B cell (primary cell): ENCODE measurements at regions of chr17 and their contacts with region 1.

Region 1: GRCh38 chr17:16987830-16988601 is 16.1 kb upstream of the TNFRSF13B start:
- DNase-seq: peak; percentile 94
- ATAC-seq: peak; percentile 81
- H3K4me3 ChIP-seq: peak overlapping the region; percentile 35 to 58 (median 50)
- H3K4me3 Mint-ChIP-seq: peak overlapping the region; percentile 85
- H3K27ac ChIP-seq: peak overlapping the region; percentile 91 to 98
- H3K27ac Mint-ChIP-seq: peak overlapping the region; percentile 98
- H3K4me1 ChIP-seq: peaks cover 53 to 68% of the 10 kb centered on the region in 2 donors
- H3K4me1 Mint-ChIP-seq: peaks cover 80% of the 10 kb centered on the region
- H3K27me3 ChIP-seq: no peaks in the 10 kb centered on the region
- H3K27me3 Mint-ChIP-seq: no peaks in the 10 kb centered on the region
- CTCF ChIP-seq: no peak

Region 2: GRCh38 chr17:16915752-16916556 is 72.1 kb before region 1 on chr17:
- CTCF ChIA-PET with region 1: interaction called, 88 read pairs
- POLR2A ChIA-PET with region 1: interaction called, 3 read pairs
- intact Hi-C with region 1: loop called (anchors 1 kb)
- DNase-seq: peak; percentile 61
- ATAC-seq: peak; percentile 78
- H3K4me3 ChIP-seq: no peak overlapping the region
- H3K4me3 Mint-ChIP-seq: no peak overlapping the region
- H3K27ac ChIP-seq: no peak overlapping the region
- H3K27ac Mint-ChIP-seq: peak overlapping the region; percentile 15
- H3K4me1 ChIP-seq: peaks cover 0 to 18% of the 10 kb centered on the region in 2 donors
- H3K4me1 Mint-ChIP-seq: peaks cover 24% of the 10 kb centered on the region
- H3K27me3 ChIP-seq: no peaks in the 10 kb centered on the region
- H3K27me3 Mint-ChIP-seq: peaks cover 3% of the 10 kb centered on the region
- CTCF ChIP-seq: peak; percentile 51

Region 3: GRCh38 chr17:16922386-16923104 is 65.5 kb before region 1 on chr17:
- CTCF ChIA-PET with region 1: interaction called, 88 read pairs
- POLR2A ChIA-PET with region 1: no interaction called
- intact Hi-C with region 1: loop called (anchors 1 kb)
- DNase-seq: peak; percentile 48
- ATAC-seq: peak; percentile 44
- H3K4me3 ChIP-seq: no peak overlapping the region
- H3K4me3 Mint-ChIP-seq: no peak overlapping the region
- H3K27ac ChIP-seq: no peak overlapping the region
- H3K27ac Mint-ChIP-seq: peak overlapping the region; percentile 22
- H3K4me1 ChIP-seq: no peaks in the 10 kb centered on the region
- H3K4me1 Mint-ChIP-seq: no peaks in the 10 kb centered on the region
- H3K27me3 ChIP-seq: no peaks in the 10 kb centered on the region
- H3K27me3 Mint-ChIP-seq: no peaks in the 10 kb centered on the region
- CTCF ChIP-seq: peak; percentile 47

Region 4: GRCh38 chr17:16945663-16946218 is 42.3 kb before region 1 on chr17:
- CTCF ChIA-PET with region 1: interaction called, 21 read pairs
- POLR2A ChIA-PET with region 1: no interaction called
- intact Hi-C with region 1: loop called (anchors 1 kb)
- DNase-seq: no peak
- ATAC-seq: no peak
- H3K4me3 ChIP-seq: no peak overlapping the region
- H3K4me3 Mint-ChIP-seq: no peak overlapping the region
- H3K27ac ChIP-seq: no peak overlapping the region
- H3K27ac Mint-ChIP-seq: peak overlapping the region; percentile 79
- H3K4me1 ChIP-seq: peaks cover 23 to 54% of the 10 kb centered on the region in 2 donors
- H3K4me1 Mint-ChIP-seq: peaks cover 61% of the 10 kb centered on the region
- H3K27me3 ChIP-seq: no peaks in the 10 kb centered on the region
- H3K27me3 Mint-ChIP-seq: no peaks in the 10 kb centered on the region
- CTCF ChIP-seq: no peak

Region 5: GRCh38 chr17:16954521-16954920 is 33.5 kb before region 1 on chr17:
- CTCF ChIA-PET with region 1: interaction called, 36 read pairs
- POLR2A ChIA-PET with region 1: no interaction called
- intact Hi-C with region 1: no loop called
- DNase-seq: no peak
- ATAC-seq: peak; percentile 24
- H3K4me3 ChIP-seq: no peak overlapping the region
- H3K4me3 Mint-ChIP-seq: peak overlapping the region; percentile 34
- H3K27ac ChIP-seq: peak overlapping the region; percentile 11 to 15
- H3K27ac Mint-ChIP-seq: peak overlapping the region; percentile 61
- H3K4me1 ChIP-seq: peaks cover 32% of the 10 kb centered on the region in 2 donors
- H3K4me1 Mint-ChIP-seq: peaks cover 78% of the 10 kb centered on the region
- H3K27me3 ChIP-seq: no peaks in the 10 kb centered on the region
- H3K27me3 Mint-ChIP-seq: no peaks in the 10 kb centered on the region
- CTCF ChIP-seq: no peak

Region 6: DNA sequence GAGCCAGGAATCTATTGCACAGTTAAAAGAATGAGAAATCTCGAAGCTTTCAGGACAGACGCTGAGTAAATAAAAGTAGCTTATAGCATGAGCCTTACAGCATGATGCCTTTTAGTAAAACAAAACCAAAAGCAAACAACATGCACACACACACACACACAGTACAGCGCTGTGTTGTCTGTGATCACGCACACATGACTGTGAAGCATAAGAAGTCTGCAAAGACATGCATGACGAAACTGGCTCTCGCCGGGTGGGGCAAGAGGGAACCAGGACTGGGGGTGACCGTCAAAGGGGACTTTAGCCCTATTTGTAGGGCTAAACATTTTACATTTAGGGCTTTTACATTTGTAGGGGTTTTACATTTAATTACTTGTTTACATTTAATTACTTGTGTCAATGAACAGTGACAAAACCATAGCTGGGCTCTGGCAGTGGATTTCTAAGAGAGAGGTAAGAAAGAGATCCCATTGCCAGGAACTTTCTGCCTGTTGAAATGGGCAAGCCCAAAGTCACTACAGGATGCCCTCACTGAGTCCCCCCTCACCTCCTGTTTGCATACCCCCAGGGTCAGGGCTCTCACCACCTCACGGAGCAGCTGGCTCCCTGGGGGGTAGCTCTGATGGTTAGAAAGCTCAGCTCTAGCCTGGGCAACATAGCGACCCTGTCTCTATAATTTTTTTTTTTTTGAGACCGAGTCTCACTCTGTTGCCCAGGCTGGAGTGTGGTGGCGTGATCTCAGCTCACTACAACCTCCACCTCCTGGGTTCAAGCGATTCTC is 14.1 kb before region 1 on chr17:
- CTCF ChIA-PET with region 1: interaction called, 317 read pairs
- POLR2A ChIA-PET with region 1: interaction called, 69 read pairs
- intact Hi-C with region 1: loop called (anchors 1 kb)
- DNase-seq: peak; percentile 84
- ATAC-seq: peak; percentile 44
- H3K4me3 ChIP-seq: peak overlapping the region in 3 of 5 experiments; percentile 11 to 42 (median 30)
- H3K4me3 Mint-ChIP-seq: peak overlapping the region; percentile 91
- H3K27ac ChIP-seq: peak overlapping the region; percentile 71 to 88
- H3K27ac Mint-ChIP-seq: peak overlapping the region; percentile 90
- H3K4me1 ChIP-seq: peaks cover 83 to 99% of the 10 kb centered on the region in 2 donors
- H3K4me1 Mint-ChIP-seq: peaks cover 92% of the 10 kb centered on the region
- H3K27me3 ChIP-seq: no peaks in the 10 kb centered on the region
- H3K27me3 Mint-ChIP-seq: no peaks in the 10 kb centered on the region
- CTCF ChIP-seq: no peak

Region 7: DNA sequence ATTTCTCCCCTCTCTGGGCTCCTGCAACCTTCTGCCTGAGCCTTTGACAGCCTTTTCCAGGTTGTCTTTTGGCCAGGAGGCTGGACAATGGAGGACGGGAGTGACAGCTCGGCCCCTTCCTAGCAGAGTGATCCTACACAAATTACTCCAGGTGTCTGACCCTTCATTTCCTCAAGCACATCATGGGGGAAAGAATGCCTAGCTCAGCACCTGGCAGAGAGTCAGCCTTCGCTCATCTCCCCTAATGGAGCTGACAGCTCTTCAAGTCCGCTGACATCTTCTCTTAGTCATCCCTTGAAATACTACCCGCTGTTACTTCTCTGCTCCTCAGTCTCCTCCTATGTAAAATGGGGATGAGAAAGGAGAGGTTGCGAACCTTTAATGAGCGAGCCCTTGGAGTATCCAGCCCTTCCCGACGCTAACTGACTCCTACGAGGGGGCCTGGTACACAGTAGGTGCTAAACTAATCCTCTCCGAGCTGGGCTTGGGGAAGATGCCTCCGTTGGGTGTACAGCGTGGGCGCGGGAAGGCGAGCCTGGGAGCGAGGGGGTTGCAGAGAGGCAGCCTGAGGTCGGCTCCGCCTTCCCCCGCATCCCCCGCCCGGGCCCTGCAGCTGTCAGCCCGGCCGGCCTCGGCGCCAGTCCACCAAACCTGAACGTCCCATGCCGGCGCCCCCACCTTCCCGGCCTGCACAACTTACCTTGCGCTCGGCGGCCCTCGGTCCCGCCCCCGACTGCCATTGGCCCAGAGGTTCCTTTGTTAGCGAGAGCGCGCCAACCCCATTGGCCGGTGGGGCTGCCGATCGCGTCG is 53.8 kb after region 1 on chr17:
- CTCF ChIA-PET with region 1: interaction called, 3 read pairs
- POLR2A ChIA-PET with region 1: interaction called, 3 read pairs
- intact Hi-C with region 1: loop called (anchors 5 kb)
- DNase-seq: peak; percentile 97
- ATAC-seq: peak; percentile 92
- H3K4me3 ChIP-seq: peak overlapping the region in 4 of 5 experiments; percentile 43 to 55 (median 50)
- H3K4me3 Mint-ChIP-seq: peak overlapping the region; percentile 71
- H3K27ac ChIP-seq: no peak overlapping the region
- H3K27ac Mint-ChIP-seq: peak overlapping the region; percentile 26
- H3K4me1 ChIP-seq: peaks cover 40 to 48% of the 10 kb centered on the region in 2 donors
- H3K4me1 Mint-ChIP-seq: peaks cover 47% of the 10 kb centered on the region
- H3K27me3 ChIP-seq: no peaks in the 10 kb centered on the region
- H3K27me3 Mint-ChIP-seq: no peaks in the 10 kb centered on the region
- CTCF ChIP-seq: no peak